Caco-2 (cell line): ENCODE measurements at regions of chr7 and their contacts with region 1.

Region 1: GRCh38 chr7:74206589-74207120 is 3.2 kb upstream of the LAT2 start:
- DNase-seq: peak; percentile 82 to 93
- H3K4me3 ChIP-seq: no peak overlapping the region
- H3K4me3 Mint-ChIP-seq: no peak overlapping the region
- H3K27ac Mint-ChIP-seq: no peak overlapping the region
- H3K4me1 ChIP-seq: no peaks in the 10 kb centered on the region
- H3K4me1 Mint-ChIP-seq: no peaks in the 10 kb centered on the region
- H3K27me3 ChIP-seq: no peaks in the 10 kb centered on the region
- H3K27me3 Mint-ChIP-seq: peaks cover 6% of the 10 kb centered on the region
- CTCF ChIP-seq: peak; percentile 95 to 97

Region 2: DNA sequence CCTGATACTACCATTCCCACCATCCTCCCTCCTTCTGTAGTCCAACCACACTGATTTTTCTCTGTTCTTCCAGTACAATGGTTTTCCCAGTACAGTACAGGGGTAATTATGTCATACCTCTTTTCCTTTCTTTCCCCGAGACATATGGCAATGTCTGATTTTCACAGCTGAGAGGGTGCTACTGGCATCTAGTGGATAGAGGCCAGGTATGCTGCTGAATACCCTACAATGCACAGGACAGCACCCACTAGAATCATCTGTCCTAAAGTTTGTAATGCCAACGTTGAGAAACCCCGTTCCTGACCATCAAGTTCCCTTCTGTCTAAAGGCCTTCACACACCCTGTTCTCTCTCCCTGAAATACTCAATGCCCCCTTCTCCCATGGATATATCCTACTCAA is 705.3 kb before region 1 on chr7:
- CTCF ChIA-PET with region 1: no interaction called
- POLR2A ChIA-PET with region 1: no interaction called
- intact Hi-C with region 1: no loop called
- DNase-seq: no peak
- H3K4me3 ChIP-seq: no peak overlapping the region
- H3K4me3 Mint-ChIP-seq: no peak overlapping the region
- H3K27ac Mint-ChIP-seq: no peak overlapping the region
- H3K4me1 ChIP-seq: no peaks in the 10 kb centered on the region
- H3K4me1 Mint-ChIP-seq: no peaks in the 10 kb centered on the region
- H3K27me3 ChIP-seq: no peaks in the 10 kb centered on the region
- H3K27me3 Mint-ChIP-seq: no peaks in the 10 kb centered on the region
- CTCF ChIP-seq: no peak

Region 3: DNA sequence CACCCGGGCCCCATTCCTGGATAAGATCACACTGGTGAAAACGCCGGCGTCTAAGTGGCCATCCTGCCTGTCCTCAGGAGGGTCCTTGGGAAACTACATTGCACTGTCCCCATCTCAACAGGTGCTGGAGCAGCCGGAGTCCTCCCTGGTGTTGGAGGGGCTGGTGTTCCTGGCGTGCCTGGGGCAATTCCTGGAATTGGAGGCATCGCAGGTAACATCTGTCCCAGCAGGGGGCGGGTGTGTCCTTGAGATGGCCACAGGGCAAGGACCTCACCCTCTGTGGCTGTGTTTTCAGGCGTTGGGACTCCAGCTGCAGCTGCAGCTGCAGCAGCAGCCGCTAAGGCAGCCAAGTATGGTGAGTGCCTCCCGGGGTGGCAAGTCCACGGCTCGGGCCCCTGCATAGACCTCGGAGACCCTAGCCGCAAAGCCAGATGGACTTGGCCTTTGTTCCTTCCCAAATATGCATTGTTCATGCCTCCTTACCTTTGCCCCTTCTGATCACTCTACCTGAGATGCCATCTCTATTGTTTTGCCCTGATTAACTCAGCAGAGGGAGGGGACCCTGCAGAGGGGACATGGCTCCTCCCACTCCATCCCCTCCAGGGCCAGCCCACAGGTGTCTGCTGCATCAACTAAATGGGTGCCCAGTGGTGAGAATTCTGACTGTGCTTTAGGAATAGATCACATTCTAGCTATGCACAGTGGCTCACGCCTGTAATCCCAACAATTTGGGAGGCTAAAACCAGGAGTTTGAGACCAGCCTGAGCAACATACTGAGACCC is 154.8 kb before region 1 on chr7:
- CTCF ChIA-PET with region 1: interaction called, 12 read pairs
- POLR2A ChIA-PET with region 1: no interaction called
- intact Hi-C with region 1: loop called (anchors 2 kb)
- DNase-seq: peak; percentile 80 to 84
- H3K4me3 ChIP-seq: no peak overlapping the region
- H3K4me3 Mint-ChIP-seq: no peak overlapping the region
- H3K27ac Mint-ChIP-seq: no peak overlapping the region
- H3K4me1 ChIP-seq: no peaks in the 10 kb centered on the region
- H3K4me1 Mint-ChIP-seq: no peaks in the 10 kb centered on the region
- H3K27me3 ChIP-seq: no peaks in the 10 kb centered on the region
- H3K27me3 Mint-ChIP-seq: peaks cover 17% of the 10 kb centered on the region
- CTCF ChIP-seq: peak; percentile 76 to 78

Region 4: GRCh38 chr7:74083117-74083876 is 123.4 kb before region 1 on chr7 and contains the start of gene LIMK1:
- CTCF ChIA-PET with region 1: interaction called, 10 read pairs
- POLR2A ChIA-PET with region 1: no interaction called
- intact Hi-C with region 1: no loop called
- DNase-seq: peak; percentile 80 to 87
- H3K4me3 ChIP-seq: peak within 1 kb of the TSS; percentile 82
- H3K4me3 Mint-ChIP-seq: peak within 1 kb of the TSS; percentile 84
- H3K27ac Mint-ChIP-seq: peak within 1 kb of the TSS; percentile 85
- H3K4me1 ChIP-seq: peaks cover 5% of the 10 kb centered on the region
- H3K4me1 Mint-ChIP-seq: no peaks in the 10 kb centered on the region
- H3K27me3 ChIP-seq: no peaks in the 10 kb centered on the region
- H3K27me3 Mint-ChIP-seq: no peaks in the 10 kb centered on the region
- CTCF ChIP-seq: no peak
- total RNA-seq, gene LIMK1: 30.6 and 31.4 TPM in 2 replicates

Region 5: DNA sequence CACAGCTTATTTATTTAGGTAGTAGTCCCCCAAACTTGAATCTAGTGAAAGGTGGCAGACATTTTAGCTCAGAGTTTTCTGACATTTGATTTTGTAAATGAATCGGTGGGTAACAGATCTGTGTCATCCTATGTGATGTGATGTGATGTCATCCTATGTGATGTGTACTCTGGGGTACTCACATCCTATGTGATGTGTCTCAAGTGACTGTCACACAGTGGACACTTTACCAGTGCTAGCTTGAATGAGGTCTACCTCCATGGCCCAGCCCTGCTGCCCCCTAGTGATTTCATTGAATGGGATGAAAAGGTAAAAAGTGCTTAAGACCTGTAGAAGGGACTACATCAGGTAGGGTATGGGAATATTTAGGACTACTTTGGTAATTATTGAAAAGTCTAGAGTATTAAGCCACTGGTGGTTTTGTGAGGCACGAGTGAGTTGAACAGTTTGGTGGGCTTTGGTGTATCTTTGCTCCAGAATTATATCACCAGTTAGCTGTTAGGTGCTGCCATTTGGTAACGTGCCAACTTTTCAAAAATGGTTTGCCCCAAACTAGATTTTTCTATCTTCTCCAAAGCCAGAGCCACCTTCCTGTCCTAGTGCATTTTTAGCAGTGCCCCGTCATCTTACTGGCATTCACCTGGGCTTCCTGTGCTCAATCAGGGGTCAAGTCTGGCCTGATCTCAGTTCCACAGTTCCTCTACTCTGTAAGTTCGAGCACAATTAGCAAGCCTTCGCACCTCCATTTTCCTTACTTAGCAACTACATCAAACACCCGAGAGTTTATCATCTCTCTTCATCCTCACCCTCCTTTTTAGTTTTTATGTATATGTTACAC is 22.8 kb before region 1 on chr7:
- CTCF ChIA-PET with region 1: interaction called, 16 read pairs
- POLR2A ChIA-PET with region 1: no interaction called
- intact Hi-C with region 1: no loop called
- DNase-seq: peak in 1 of 2 experiments; percentile 59
- H3K4me3 ChIP-seq: no peak overlapping the region
- H3K4me3 Mint-ChIP-seq: no peak overlapping the region
- H3K27ac Mint-ChIP-seq: no peak overlapping the region
- H3K4me1 ChIP-seq: peaks cover 20% of the 10 kb centered on the region
- H3K4me1 Mint-ChIP-seq: peaks cover 39% of the 10 kb centered on the region
- H3K27me3 ChIP-seq: no peaks in the 10 kb centered on the region
- H3K27me3 Mint-ChIP-seq: no peaks in the 10 kb centered on the region
- CTCF ChIP-seq: peak; percentile 34 to 55

Region 6: DNA sequence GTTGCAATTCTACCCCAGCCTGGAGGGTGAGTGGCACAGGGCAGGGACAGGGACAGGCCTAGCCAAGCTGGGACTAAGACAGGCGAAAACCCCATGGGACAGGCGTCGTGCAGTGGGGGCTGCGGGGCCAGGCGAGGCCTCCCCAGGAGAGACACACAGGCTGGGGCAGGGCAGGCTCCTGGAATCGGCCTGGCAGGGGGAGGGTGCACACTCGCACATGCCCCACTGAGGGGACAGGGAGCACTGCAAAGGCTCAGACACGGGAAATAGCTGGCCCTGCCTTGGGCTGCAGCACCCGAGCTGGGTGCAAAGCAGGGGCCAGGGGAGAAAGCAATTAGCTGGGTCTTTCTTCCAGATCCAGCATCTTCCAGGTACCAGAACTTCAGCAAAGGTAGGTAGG is 13.6 kb after region 1 on chr7:
- CTCF ChIA-PET with region 1: interaction called, 16 read pairs
- POLR2A ChIA-PET with region 1: no interaction called
- intact Hi-C with region 1: no loop called
- DNase-seq: no peak
- H3K4me3 ChIP-seq: no peak overlapping the region
- H3K4me3 Mint-ChIP-seq: no peak overlapping the region
- H3K27ac Mint-ChIP-seq: peak overlapping the region; percentile 69
- H3K4me1 ChIP-seq: peaks cover 13% of the 10 kb centered on the region
- H3K4me1 Mint-ChIP-seq: peaks cover 13% of the 10 kb centered on the region
- H3K27me3 ChIP-seq: no peaks in the 10 kb centered on the region
- H3K27me3 Mint-ChIP-seq: no peaks in the 10 kb centered on the region
- CTCF ChIP-seq: no peak

Region 7: DNA sequence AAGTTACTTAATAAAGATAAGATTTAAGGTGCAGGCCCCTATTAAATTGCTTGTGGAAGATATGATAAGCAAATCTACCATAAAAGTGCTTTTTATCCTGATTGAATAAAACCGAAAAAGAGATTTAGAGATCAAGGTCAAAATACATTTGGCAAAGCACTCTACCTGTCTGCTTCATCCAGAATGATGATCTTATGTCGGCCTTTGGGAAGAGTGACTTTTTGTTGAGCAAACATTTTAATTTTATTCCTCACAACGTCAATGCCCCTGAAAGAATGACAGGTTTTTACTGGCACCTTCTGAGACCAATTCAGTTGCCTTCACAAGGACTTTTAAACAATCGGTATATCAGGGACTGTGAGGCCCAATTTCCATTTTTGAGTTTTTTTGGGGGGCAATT is 39.8 kb after region 1 on chr7:
- CTCF ChIA-PET with region 1: interaction called, 6 read pairs
- POLR2A ChIA-PET with region 1: no interaction called
- intact Hi-C with region 1: loop called (anchors 2 kb)
- DNase-seq: no peak
- H3K4me3 ChIP-seq: no peak overlapping the region
- H3K4me3 Mint-ChIP-seq: no peak overlapping the region
- H3K27ac Mint-ChIP-seq: no peak overlapping the region
- H3K4me1 ChIP-seq: peaks cover 7% of the 10 kb centered on the region; the same call in 1 of the 2 replicates
- H3K4me1 Mint-ChIP-seq: peaks cover 7% of the 10 kb centered on the region
- H3K27me3 ChIP-seq: no peaks in the 10 kb centered on the region
- H3K27me3 Mint-ChIP-seq: no peaks in the 10 kb centered on the region
- CTCF ChIP-seq: no peak

Region 8: GRCh38 chr7:74395745-74396311 is 189.2 kb after region 1 on chr7:
- CTCF ChIA-PET with region 1: interaction called, 76 read pairs
- POLR2A ChIA-PET with region 1: no interaction called
- intact Hi-C with region 1: loop called (anchors 1 kb)
- DNase-seq: no peak
- H3K4me3 ChIP-seq: no peak overlapping the region
- H3K4me3 Mint-ChIP-seq: no peak overlapping the region
- H3K27ac Mint-ChIP-seq: no peak overlapping the region
- H3K4me1 ChIP-seq: 0 out of 2 replicates have a peak, but pooled peaks cover 3% of the 10 kb centered on the region
- H3K4me1 Mint-ChIP-seq: peaks cover 7% of the 10 kb centered on the region
- H3K27me3 ChIP-seq: no peaks in the 10 kb centered on the region
- H3K27me3 Mint-ChIP-seq: no peaks in the 10 kb centered on the region
- CTCF ChIP-seq: no peak